Mammary epithelial cell (primary cell): ENCODE measurements at regions of chr6 and their contacts with region 1.

Region 1: GRCh38 chr6:108113557-108114519 is 39.3 kb upstream of the OSTM1 start:
- DNase-seq: peak; percentile 45
- H3K4me3 ChIP-seq: peak overlapping the region in 1 of 3 experiments; percentile 10
- H3K27ac ChIP-seq: no peak overlapping the region
- H3K4me1 ChIP-seq: peaks cover 27% of the 10 kb centered on the region
- H3K27me3 ChIP-seq: peaks cover 14% of the 10 kb centered on the region
- CTCF ChIP-seq: peak; percentile 33 to 50

Region 2: DNA sequence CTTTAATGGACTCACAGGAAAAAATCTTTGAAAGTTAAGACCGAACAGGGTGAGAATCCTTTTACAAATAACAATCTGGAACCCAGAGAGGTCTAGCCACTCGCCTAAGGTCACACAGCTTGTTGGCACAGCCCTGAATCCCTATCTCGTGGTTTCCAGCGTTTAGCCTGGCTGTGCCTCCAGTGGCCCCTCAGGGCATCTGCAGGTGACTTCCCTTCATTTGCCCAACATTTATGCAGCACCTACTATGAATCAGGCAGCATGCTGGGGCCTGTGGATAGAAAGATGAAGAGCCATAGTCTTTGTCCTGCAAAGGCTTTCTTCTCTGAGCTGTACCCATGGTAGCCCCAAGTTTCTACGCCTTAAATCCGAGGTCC is 49.4 kb after region 1 on chr6:
- CTCF ChIA-PET with region 1: no interaction called
- dilution Hi-C with region 1: no loop called
- in situ Hi-C with region 1: no loop called
- intact Hi-C with region 1: loop called (anchors 5 kb)
- DNase-seq: peak; percentile 77
- H3K4me3 ChIP-seq: no peak overlapping the region
- H3K27ac ChIP-seq: no peak overlapping the region
- H3K4me1 ChIP-seq: peaks cover 29% of the 10 kb centered on the region
- H3K27me3 ChIP-seq: peaks cover 71% of the 10 kb centered on the region
- CTCF ChIP-seq: peak in 1 of 2 donors; percentile 11

Region 3: DNA sequence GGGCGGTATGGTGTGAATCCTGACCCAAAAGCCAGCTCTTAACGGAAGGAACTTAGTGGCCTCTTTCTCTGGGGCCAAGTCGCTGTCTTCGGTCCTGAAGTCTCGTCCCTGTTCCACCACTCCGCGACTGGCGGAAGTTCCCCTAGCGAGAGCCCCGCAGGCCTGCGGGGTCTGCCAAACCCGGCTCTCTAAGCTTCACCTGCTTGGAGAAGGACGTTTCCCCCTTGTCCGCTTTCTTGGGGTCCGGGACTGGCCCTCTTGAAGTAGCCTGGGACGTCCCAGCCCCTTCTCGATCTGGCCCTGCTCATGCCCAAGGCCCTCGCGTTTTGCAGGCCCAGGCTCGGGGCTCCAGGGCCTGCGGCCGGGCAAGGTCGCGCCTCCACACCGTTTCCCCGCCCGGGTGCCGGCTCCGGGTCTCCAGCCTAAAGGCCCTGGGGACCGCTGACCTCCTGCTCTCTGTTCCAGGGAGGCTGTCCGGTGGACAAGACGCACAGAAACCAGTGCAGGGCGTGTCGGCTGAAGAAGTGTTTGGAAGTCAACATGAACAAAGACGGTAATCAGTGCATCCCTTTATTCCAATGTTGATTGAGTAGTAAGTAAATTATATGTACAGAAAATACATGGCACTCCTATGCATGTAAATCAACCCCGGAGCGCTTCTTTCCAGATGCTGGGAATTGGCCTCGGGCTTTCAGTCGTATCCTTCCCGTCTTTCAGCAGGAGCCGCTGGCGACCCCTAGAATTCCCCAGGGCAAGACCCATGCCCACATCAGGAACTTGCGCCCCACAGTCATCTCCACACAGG is 60.7 kb after region 1 on chr6:
- CTCF ChIA-PET with region 1: no interaction called
- dilution Hi-C with region 1: loop called (anchors 5 kb)
- in situ Hi-C with region 1: no loop called
- intact Hi-C with region 1: no loop called
- DNase-seq: no peak
- H3K4me3 ChIP-seq: no peak overlapping the region
- H3K27ac ChIP-seq: no peak overlapping the region
- H3K4me1 ChIP-seq: peaks cover 8% of the 10 kb centered on the region
- H3K27me3 ChIP-seq: peaks cover 49% of the 10 kb centered on the region
- CTCF ChIP-seq: no peak

Region 4: GRCh38 chr6:108260809-108261569 is 147.2 kb after region 1 on chr6 and contains the start of gene SNX3:
- CTCF ChIA-PET with region 1: no interaction called
- dilution Hi-C with region 1: no loop called
- in situ Hi-C with region 1: no loop called
- intact Hi-C with region 1: loop called (anchors 1 kb)
- DNase-seq: peak; percentile 98
- H3K4me3 ChIP-seq: peak within 1 kb of the TSS; percentile 84 to 98 (median 93)
- H3K27ac ChIP-seq: peak within 1 kb of the TSS; percentile 75
- H3K4me1 ChIP-seq: peaks cover 12% of the 10 kb centered on the region
- H3K27me3 ChIP-seq: no peaks in the 10 kb centered on the region
- CTCF ChIP-seq: peak in 1 of 2 donors; percentile 14
- total RNA-seq, gene SNX3: 143 to 147 TPM

Region 5: DNA sequence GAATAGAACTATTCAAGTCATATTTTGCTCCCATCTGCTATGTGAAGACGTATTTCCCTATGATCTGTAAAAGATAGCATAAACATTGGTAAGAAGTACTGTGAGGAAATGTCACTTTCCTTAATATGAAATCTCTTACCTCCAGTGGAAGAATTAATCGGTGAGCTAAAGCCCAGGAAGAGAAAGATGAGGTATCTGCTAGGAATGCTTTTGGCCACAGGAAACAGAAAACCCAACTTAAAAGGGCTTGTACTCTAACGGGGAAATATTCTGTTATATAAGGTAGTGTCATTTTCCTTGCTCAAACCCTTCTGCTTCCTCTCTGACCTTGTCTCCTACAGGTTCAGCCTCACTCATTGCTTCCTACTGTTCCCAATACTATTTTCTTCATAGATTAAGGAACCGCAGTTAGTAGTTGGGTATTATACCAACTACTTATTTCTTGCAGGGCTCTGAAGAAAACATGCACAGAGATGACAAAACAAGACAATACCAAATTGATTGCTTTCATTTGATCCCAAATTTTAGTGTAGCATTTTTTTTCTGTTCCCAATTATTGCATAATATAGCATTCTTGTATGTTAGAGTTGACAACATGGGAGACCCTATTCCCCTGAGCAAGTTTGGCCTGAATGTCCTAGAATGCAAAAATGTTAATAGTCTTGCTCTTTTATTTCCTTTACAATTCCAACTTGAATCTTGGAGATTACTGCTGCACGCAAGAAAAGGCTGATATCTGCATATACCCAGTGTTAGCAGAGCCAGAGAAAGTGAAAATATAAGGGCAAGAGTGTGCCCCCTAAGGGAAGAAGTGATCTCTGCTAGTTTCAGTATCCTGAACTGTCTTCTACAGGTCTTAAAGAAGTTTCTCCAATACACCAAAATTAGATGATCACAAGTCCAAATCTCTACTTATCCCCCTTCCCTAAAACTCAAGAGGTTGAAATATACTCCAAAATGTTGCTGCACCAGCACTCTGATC is 246.4 kb after region 1 on chr6:
- CTCF ChIA-PET with region 1: no interaction called
- dilution Hi-C with region 1: no loop called
- in situ Hi-C with region 1: no loop called
- intact Hi-C with region 1: loop called (anchors 10 kb)
- DNase-seq: peak; percentile 4
- H3K4me3 ChIP-seq: no peak overlapping the region
- H3K27ac ChIP-seq: no peak overlapping the region
- H3K4me1 ChIP-seq: peaks cover 4% of the 10 kb centered on the region
- H3K27me3 ChIP-seq: no peaks in the 10 kb centered on the region
- CTCF ChIP-seq: peak in 1 of 2 donors; percentile 4

Region 6: DNA sequence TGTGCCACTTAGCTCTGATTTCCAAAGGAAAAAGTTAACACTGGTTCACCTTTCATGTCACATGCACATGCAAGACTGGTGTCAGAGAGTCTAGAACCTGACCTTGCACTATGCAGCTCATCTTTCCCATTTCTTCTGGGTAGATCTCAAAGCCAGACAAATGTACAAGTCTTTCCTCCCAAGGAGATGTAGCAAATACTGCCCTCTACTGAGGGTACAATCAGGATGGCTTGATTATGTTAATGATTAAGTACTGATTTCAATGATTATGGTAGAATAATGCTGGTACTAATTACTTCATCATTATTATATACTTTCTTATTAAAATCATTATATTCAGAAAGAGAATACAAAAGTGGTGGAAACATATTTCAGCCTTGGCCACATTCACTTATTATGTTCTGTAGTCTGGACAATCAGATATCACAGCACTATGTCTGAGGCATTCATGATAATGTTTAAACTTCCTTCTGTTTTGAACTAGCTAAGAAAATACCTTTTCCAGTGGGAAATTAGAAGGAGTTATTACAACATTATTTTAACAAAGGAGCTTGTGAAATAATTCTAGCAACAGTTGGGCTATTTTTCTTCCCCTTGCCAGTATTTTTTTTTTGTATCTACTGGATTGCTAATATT is 378.4 kb after region 1 on chr6:
- CTCF ChIA-PET with region 1: interaction called, 4 read pairs
- dilution Hi-C with region 1: no loop called
- in situ Hi-C with region 1: loop called (anchors 10 kb)
- intact Hi-C with region 1: loop called (anchors 1 kb)
- DNase-seq: peak; percentile 37
- H3K4me3 ChIP-seq: no peak overlapping the region
- H3K27ac ChIP-seq: no peak overlapping the region
- H3K4me1 ChIP-seq: no peaks in the 10 kb centered on the region
- H3K27me3 ChIP-seq: no peaks in the 10 kb centered on the region
- CTCF ChIP-seq: peak; percentile 73 to 76

Region 7: DNA sequence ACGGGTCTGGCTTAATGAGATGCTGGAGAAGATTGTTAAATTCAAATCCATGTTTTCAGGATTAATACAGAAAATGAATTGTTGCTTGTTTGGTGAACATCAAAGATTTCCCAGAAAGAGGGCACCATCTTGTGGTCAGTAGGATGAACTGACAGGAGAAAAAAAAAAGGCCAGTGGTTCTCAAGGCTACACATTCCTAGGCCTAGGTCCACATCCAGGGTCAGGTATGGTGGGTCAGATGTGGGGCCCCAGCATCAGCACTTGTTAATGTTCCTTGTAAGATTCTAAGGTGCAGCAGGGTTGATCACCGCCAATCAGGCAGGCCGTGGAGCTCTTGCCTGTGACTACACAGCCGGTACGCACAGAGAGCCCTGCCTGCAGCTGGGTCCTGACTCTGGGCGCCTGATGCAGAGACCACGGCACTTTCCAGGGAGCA is 412.9 kb after region 1 on chr6:
- CTCF ChIA-PET with region 1: no interaction called
- dilution Hi-C with region 1: no loop called
- in situ Hi-C with region 1: loop called in 1 of 2 experiments (anchors 10 kb)
- intact Hi-C with region 1: loop called (anchors 1 kb)
- DNase-seq: peak; percentile 16
- H3K4me3 ChIP-seq: no peak overlapping the region
- H3K27ac ChIP-seq: no peak overlapping the region
- H3K4me1 ChIP-seq: no peaks in the 10 kb centered on the region
- H3K27me3 ChIP-seq: no peaks in the 10 kb centered on the region
- CTCF ChIP-seq: peak; percentile 78 to 80